Calu3 (cell line): ENCODE measurements at regions of chr1 and their contacts with region 1.

Region 1: GRCh38 chr1:197356723-197357533 is 88.9 kb downstream of the CRB1 start:
- DNase-seq: peak; percentile 54
- H3K4me3 Mint-ChIP-seq: no peak overlapping the region
- H3K27ac Mint-ChIP-seq: no peak overlapping the region
- H3K4me1 Mint-ChIP-seq: peaks cover 9% of the 10 kb centered on the region
- H3K27me3 Mint-ChIP-seq: no peaks in the 10 kb centered on the region
- CTCF ChIP-seq: peak; percentile 82

Region 2: GRCh38 chr1:196355206-196355786 is 1001.6 kb before region 1 on chr1:
- CTCF ChIA-PET with region 1: no interaction called
- intact Hi-C with region 1: loop called (anchors 10 kb)
- DNase-seq: peak; percentile 16
- H3K4me3 Mint-ChIP-seq: no peak overlapping the region
- H3K27ac Mint-ChIP-seq: no peak overlapping the region
- H3K4me1 Mint-ChIP-seq: no peaks in the 10 kb centered on the region
- H3K27me3 Mint-ChIP-seq: no peaks in the 10 kb centered on the region
- CTCF ChIP-seq: peak; percentile 42

Region 3: DNA sequence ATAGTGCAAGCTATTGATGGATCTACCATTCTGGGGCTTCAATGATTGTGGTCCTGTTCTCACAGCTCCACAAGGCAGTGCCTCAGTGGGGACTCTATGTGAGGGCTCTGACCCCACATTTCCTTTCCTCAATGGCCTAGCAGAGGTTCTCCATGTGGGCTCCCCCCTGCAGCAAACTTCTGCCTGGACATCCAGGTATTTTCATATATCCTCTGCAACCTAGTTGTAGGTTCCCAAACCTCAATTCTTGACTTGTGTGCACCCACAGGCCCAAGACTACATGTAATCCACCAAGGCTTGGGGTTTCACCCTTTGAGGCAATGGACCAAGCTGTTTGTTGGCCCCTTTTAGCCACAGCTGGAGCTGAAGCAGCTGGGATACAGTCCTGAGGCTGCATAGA is 618.2 kb before region 1 on chr1:
- CTCF ChIA-PET with region 1: no interaction called
- intact Hi-C with region 1: loop called (anchors 2 kb)
- DNase-seq: no peak
- H3K4me3 Mint-ChIP-seq: no peak overlapping the region
- H3K27ac Mint-ChIP-seq: no peak overlapping the region
- H3K4me1 Mint-ChIP-seq: peaks cover 8% of the 10 kb centered on the region
- H3K27me3 Mint-ChIP-seq: no peaks in the 10 kb centered on the region
- CTCF ChIP-seq: no peak

Region 4: DNA sequence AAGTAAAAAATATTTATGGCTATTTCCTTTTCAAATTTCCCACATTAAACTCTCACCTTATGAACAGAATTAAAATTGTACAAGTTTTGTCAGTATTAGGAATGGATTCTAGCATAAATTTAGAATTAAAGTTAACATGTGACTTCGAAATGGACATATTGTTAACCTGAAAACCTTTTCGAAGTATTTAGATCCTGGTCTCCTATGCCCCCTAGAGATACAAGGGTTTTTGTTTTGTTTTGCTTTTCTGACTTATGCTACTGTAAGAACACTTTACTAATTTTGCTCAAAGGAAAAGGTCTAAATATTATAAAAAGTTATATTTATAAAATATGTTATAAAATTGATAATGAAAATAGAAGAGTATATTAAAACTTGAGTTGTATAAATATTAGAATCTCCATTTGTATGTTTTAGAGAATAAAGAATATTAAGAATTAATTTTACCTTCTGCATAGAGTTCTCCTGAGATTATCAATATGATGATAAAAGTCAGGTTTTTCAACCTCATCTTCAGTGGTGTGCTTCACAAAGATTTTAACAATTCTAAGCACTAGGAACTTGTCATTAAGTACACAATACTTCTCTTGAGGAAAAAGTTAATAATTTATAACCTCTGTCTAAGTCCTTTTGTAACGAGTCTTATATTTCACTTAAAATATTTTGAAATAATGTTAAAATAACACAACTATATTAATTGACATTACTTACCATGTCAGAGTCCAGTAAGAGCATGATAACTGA is 290.0 kb before region 1 on chr1 and contains the start of gene F13B:
- CTCF ChIA-PET with region 1: no interaction called
- intact Hi-C with region 1: no loop called
- DNase-seq: no peak
- H3K4me3 Mint-ChIP-seq: no peak within 1 kb of the TSS
- H3K27ac Mint-ChIP-seq: no peak within 1 kb of the TSS
- H3K4me1 Mint-ChIP-seq: no peaks in the 10 kb centered on the region
- H3K27me3 Mint-ChIP-seq: no peaks in the 10 kb centered on the region
- CTCF ChIP-seq: no peak
- total RNA-seq, gene F13B: not detected in 2 replicates

Region 5: GRCh38 chr1:197180252-197180878 is 176.6 kb before region 1 on chr1:
- CTCF ChIA-PET with region 1: interaction called, 12 read pairs
- intact Hi-C with region 1: loop called (anchors 1 kb)
- DNase-seq: no peak
- H3K4me3 Mint-ChIP-seq: no peak overlapping the region
- H3K27ac Mint-ChIP-seq: no peak overlapping the region
- H3K4me1 Mint-ChIP-seq: peaks cover 17% of the 10 kb centered on the region
- H3K27me3 Mint-ChIP-seq: no peaks in the 10 kb centered on the region
- CTCF ChIP-seq: peak; percentile 47

Region 6: GRCh38 chr1:197224160-197224559 is 132.8 kb before region 1 on chr1:
- CTCF ChIA-PET with region 1: interaction called, 18 read pairs
- intact Hi-C with region 1: loop called (anchors 1 kb)
- DNase-seq: no peak
- H3K4me3 Mint-ChIP-seq: no peak overlapping the region
- H3K27ac Mint-ChIP-seq: no peak overlapping the region
- H3K4me1 Mint-ChIP-seq: peaks cover 12% of the 10 kb centered on the region
- H3K27me3 Mint-ChIP-seq: no peaks in the 10 kb centered on the region
- CTCF ChIP-seq: peak; percentile 49

Region 7: DNA sequence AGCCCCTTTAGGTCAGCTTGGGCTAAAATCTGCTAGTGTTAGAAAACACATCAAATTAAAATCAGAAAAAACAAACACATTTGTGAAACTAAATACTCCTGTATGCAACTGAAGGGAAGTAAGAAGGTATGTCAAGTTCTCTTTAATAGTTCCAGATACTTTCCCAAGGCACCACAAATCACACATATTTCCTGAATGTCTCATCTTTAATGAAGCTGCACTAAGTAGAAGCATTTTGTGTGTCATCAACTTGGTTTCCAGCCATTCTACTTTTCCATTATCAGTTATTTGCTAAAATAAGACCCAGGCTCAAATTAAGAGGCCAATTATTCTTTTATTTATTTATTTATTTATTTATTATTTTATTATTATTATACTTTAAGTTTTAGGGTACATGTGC is 54.2 kb before region 1 on chr1:
- CTCF ChIA-PET with region 1: no interaction called
- intact Hi-C with region 1: no loop called
- DNase-seq: no peak
- H3K4me3 Mint-ChIP-seq: no peak overlapping the region
- H3K27ac Mint-ChIP-seq: no peak overlapping the region
- H3K4me1 Mint-ChIP-seq: peaks cover 23% of the 10 kb centered on the region
- H3K27me3 Mint-ChIP-seq: no peaks in the 10 kb centered on the region
- CTCF ChIP-seq: no peak

Region 8: DNA sequence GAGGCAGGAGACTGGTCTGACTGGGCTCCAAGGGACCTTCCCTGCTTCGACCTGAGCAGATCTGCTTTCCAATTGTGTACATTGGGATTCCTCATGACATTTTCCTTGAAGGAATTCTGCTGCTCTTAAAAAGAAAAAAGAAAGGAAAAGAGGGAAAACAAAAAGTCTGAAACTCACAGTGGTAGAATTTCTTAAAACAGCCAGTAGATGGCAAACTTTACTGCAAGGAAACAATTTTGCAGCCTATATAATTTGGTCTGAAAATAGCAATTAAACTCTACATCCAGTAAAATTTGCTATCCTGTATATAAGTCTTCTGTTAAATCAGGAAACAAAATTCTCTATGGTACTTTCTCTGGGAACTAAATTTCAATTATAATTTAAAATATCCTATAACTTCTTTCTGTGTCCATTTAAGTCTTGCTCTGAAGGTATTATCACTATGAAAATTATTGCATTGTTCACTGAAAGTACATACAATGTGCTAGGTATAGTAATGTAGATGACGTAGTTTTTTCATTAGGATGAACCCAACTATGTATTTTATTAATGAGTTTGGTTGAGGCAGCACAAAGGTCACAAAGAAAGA is 29.1 kb before region 1 on chr1:
- CTCF ChIA-PET with region 1: interaction called, 4 read pairs
- intact Hi-C with region 1: loop called (anchors 1 kb)
- DNase-seq: no peak
- H3K4me3 Mint-ChIP-seq: no peak overlapping the region
- H3K27ac Mint-ChIP-seq: no peak overlapping the region
- H3K4me1 Mint-ChIP-seq: no peaks in the 10 kb centered on the region
- H3K27me3 Mint-ChIP-seq: no peaks in the 10 kb centered on the region
- CTCF ChIP-seq: peak; percentile 56

Region 9: DNA sequence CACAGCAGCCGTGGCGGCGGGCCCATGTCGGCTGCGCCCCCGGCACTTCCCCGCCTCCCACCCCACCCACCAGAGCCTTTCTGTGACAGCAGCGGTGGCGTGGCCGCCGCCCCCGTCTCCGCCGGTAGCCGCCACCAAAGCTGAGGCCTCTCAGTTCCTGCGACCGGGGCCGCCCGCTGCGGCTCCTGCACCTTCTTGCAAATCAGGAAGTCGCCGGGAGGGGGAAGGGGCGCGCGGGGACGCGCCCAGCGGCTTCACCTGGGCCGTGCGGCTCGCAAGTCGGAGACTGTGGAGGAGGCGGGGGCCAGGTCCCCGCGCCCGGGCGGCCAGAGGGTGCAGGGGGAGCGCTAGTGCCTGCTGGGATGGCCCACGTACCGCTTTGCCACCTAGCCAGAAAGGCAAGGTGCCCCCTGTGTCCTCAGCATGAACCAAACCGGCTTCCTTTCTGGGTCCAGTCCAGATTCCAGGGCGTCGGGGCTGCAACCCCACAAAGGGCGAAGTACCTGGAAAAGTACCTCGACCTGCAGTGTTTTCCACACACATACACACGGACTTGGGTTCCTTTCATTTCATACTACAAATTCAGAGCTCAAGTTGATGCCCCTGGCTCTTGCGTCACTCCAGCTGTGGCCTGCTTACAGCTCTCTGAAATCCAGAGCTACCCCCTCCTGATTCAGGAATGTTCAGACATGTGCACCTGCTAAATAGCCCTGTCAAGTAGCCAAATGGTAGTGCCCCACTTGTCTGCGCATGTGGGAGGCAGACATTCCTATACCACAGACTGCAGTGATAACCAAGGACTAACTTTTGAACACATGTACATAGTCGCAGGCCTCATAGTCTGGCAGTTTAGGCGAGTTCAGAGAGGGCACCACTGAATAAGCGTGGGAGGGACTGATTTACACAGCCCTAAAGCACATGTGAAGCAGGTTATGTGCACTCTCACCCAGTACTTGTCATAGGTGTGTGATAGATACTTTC is 418.6 kb after region 1 on chr1 and contains the start of gene DENND1B:
- CTCF ChIA-PET with region 1: no interaction called
- intact Hi-C with region 1: no loop called
- DNase-seq: peak; percentile 93
- H3K4me3 Mint-ChIP-seq: peak within 1 kb of the TSS; percentile 72
- H3K27ac Mint-ChIP-seq: peak within 1 kb of the TSS; percentile 93
- H3K4me1 Mint-ChIP-seq: peaks cover 44% of the 10 kb centered on the region
- H3K27me3 Mint-ChIP-seq: no peaks in the 10 kb centered on the region
- CTCF ChIP-seq: no peak
- total RNA-seq, gene DENND1B: 26.7 and 28.2 TPM in 2 replicates